ENCODE measurements at regions of chr6 and their contacts with region 1.

Region 1: GRCh38 chr6:72084992-72085569 is 198.7 kb downstream of the RIMS1 start:
- DNase-seq: no peak
- H3K4me3 ChIP-seq: no peak overlapping the region
- H3K27ac ChIP-seq: no peak overlapping the region
- H3K4me1 ChIP-seq: no peaks in the 10 kb centered on the region
- H3K27me3 ChIP-seq: no peaks in the 10 kb centered on the region
- CTCF ChIP-seq: peak in 4 of 11 experiments; percentile 14 to 32 (median 31)
- POLR2A ChIP-seq: no peak

Region 2: GRCh38 chr6:71533939-71534379 is 551.1 kb before region 1 on chr6:
- intact Hi-C with region 1: loop called (anchors 10 kb)
- DNase-seq: no peak
- H3K4me3 ChIP-seq: no peak overlapping the region
- H3K27ac ChIP-seq: no peak overlapping the region
- H3K4me1 ChIP-seq: no peaks in the 10 kb centered on the region
- H3K27me3 ChIP-seq: no peaks in the 10 kb centered on the region
- CTCF ChIP-seq: peak in 8 of 11 experiments; percentile 22 to 58 (median 44)
- POLR2A ChIP-seq: no peak